AG04449 (cell line): ENCODE measurements at regions of chr16 and their contacts with region 1.

Region 1: GRCh38 chr16:68843482-68844210 is at the start of gene TANGO6:
- DNase-seq: no peak
- H3K4me3 ChIP-seq: peak within 1 kb of the TSS; percentile 86
- CTCF ChIP-seq: peak; percentile 50

Region 2: DNA sequence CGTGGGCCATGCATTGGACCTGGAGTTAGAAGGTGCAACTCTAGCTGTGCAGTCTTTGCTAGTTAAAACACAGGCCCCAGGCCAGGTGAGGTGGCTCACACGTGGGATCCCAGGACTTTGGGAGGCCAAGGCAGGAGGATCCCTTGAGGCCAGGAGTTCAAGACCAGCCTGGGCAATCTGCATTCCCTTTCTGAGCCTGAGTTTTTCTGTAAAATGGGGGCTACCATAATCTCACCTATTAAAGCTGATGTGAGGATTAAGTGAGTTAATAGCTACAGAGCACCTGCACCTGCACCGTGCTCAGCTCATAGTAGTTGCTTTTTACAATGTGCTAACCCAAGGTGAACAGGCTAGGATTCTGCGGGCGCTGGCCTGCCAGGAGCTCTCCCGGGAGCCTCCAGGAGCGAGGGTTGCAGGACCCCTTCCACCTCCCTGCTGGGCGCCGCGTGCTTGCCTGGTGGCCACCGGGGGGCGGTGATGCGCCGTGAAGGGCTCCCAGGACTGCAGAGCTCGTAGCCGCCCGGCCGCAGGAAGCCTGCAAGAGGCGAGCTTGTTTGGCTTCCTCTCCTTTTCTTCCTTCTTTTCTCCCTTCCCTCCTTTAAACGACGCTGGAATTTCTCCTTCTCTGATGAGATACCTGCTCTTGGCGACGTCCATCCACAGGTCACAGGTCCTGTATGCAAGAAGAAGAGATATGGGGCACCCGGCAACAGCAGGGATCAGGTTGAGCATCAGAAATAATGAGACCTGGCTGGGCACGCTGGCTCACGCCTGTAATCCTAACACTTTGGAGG is 253.2 kb before region 1 on chr16:
- CTCF ChIA-PET with region 1: interaction called, 26 read pairs
- POLR2A ChIA-PET with region 1: interaction called, 5 read pairs
- DNase-seq: no peak
- H3K4me3 ChIP-seq: no peak overlapping the region; the same call in 1 of the 2 replicates
- CTCF ChIP-seq: peak; percentile 93

Region 3: DNA sequence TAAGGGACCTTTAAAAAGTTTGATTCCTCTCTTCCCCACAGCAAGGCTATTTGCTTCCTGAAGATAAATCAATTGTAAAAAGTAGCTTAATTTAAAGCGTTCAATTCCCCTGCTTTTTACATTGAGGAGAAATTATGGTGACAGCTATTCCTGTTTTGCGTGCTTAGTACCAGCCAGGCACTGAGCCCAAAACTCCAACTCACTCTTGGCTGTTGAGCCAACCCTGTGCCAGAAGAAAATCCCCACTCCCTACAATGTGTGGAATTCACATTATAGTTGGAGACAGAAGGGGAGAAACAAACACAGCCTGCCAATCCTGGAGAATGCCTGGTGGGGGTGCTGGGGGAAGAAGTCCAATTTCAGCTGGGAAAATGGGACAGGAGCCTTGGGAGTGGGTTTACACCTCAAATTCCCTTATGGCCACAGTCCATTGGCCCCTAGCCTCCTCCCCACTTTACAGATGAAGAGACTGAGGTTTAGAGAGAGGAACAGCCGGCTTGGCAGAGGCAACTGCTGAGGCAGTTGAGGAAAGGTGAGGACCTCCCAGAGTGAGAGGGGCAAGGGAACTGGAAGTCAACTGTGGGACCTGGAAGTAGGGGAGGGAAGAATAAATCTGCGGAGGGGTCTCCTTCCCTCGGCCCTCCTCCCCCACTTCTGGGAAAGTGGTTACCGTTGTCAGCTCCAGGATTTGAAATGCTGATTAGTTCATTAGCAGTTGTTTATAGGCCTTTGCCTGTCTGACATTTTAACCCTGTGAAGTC is 80.5 kb before region 1 on chr16:
- CTCF ChIA-PET with region 1: no interaction called
- POLR2A ChIA-PET with region 1: no interaction called
- DNase-seq: no peak
- H3K4me3 ChIP-seq: no peak overlapping the region
- CTCF ChIP-seq: no peak

Region 4: DNA sequence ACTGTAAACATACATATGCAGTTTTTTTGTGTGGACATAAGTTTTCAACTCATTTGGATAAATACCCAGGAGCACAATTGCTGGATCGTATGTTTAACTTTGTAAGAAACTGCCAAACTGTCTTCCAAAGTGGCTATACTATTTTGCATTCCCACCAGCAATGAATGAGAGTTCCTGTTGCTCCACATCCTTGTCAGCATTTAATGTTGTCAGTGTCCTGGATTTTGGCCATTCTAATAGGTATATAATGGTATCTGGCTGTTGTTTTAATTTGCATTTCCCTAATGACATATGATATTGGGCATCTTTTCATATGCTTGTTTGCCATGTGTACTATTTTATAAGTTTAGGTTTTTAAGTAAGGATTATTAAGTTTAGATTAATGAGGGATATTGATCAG is 13.8 kb after region 1 on chr16:
- CTCF ChIA-PET with region 1: interaction called, 13 read pairs
- POLR2A ChIA-PET with region 1: no interaction called
- DNase-seq: no peak
- H3K4me3 ChIP-seq: no peak overlapping the region
- CTCF ChIP-seq: no peak

Region 5: DNA sequence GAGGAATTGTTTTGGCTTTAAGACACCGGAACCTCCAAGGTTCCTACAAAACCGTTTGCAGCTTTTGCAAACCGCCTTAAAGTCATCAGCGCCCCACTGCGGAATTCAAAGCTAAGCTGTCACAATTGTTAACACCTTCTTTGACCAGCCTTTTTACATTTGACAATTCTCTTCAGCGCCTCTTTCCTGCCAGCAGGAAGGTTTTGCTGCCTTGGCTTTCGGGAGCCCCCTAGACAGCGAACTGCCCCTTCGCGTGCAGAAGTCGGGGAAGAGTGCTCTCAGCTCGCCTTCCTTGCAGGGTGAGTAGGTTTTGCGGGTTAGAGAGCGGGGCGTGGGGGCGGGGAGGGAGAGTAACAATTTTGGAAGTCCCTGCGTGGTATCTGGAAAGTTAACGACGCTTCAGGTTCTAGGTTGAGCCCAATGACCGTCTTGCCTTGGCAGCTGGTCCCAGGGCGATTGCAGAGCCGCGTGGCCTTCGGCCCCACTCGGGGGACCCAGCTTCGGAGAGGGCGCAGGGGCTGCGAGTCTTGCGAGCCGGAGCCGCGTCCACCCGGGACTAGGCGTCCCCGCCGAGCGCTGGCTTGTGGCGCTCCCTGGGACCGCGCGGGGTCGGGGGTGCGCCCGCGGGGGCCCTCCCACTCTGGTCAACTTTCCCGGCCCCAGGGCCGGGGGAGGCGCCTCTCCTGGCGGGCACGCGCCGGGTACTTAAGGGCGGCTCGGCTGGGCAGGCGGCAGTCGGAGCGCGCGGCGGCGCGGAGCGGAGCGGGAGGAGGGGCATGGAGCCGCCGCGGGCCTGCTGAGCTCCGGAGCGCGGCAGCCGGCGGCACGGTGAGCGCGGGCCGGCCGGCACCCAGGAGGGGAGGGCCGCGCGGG is 262.1 kb after region 1 on chr16 and contains the start of gene HAS3:
- CTCF ChIA-PET with region 1: interaction called, 303 read pairs
- POLR2A ChIA-PET with region 1: no interaction called
- DNase-seq: no peak
- H3K4me3 ChIP-seq: peak within 1 kb of the TSS; percentile 63
- CTCF ChIP-seq: peak; percentile 23

Region 6: DNA sequence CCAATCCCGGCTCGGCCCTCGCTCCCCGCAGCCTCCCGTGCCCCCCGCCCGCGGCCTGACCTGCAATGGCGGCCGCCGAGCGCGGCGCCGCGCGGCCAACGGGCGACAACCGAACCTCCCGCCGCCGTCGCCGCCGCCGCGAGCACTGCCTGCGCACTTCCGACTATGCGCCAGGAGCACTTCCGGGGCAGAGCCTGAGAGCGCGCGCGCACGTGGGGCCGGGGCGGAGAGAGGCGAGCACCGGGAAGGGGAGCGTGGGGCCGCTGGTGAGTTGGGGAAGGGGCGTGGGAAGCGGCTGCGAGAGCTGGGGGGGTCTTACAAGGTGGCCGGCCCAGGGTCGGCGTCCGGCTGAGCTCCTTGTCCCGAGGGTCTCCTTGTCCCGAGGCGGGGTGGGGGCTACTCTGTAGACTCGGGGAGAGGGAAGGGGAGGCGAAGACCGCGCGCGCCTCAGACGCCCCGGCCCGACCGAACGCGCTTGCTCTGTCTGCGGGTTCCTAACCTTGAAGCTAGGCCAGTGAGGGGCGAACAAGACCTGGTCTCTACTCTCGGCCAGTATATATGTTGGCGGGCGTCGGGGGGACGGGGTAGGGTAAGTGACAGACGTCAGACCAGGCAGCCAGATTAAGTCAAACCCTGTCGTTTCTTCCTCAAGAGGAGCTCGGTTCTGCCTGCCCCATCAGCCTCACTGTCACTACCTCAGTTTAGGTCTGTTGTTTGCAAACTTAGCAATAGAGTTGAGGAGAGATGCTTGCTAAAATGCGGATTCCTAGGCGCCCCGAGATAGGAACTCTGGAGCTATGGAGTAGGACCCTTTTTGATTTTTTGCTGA is 289.0 kb after region 1 on chr16 and contains the starts of genes CHTF8 and UTP4:
- CTCF ChIA-PET with region 1: interaction called, 14 read pairs
- POLR2A ChIA-PET with region 1: no interaction called
- DNase-seq: no peak
- H3K4me3 ChIP-seq: peak within 1 kb of the TSS; percentile 99
- CTCF ChIP-seq: no peak